Activated CD4-positive, alpha-beta memory T cell treated with anti-CD3 and anti-CD28 coated beads for 36 hours (primary cell): ENCODE measurements at regions of chr17 and their contacts with region 1.

Region 1: DNA sequence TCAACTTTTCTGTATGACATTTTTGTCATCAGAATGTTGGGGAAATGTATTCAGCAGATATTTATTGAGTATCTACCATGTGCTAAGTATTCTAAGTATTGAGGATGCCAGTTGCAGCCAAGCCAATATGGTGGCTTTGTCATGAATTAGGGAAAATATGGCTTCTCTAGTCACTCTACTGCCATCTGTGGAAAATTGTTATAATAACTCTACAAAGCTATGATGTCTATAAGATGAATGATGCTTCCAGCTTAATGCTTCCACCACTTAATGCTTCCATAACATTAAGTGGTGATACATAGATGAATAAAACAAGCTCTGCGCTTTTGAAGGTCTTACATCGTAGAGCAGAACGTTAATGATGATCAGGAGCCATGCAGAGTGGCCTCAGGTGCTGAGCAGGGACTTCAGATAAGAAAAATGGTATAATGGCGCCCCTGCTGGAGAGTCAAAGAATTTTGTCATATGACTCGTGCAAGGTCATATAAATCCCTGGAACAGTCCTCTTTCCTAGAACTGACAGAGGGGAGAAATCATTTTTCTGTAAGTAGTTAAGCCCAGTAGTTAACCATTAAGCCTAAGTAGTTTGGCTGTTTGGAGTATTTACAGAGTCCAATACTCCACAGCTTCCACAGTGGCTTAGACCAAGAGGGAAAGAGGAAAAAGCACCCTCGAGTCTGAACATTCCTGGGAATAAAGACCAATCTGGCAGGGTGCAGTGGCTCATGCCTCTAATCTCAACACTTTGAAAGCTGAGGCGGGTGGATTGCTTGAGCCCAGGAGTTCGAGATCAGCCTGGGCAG is 2.7 kb upstream of the TMIGD1 start:
- DNase-seq: peak; percentile 68
- H3K4me3 Mint-ChIP-seq: peak overlapping the region; percentile 13
- H3K27ac Mint-ChIP-seq: no peak overlapping the region
- H3K4me1 Mint-ChIP-seq: peaks cover 37% of the 10 kb centered on the region
- H3K27me3 Mint-ChIP-seq: no peaks in the 10 kb centered on the region

Region 2: GRCh38 chr17:30124273-30124796 is 212.2 kb before region 1 on chr17:
- CTCF ChIA-PET with region 1: interaction called, 137 read pairs
- POLR2A ChIA-PET with region 1: no interaction called
- intact Hi-C with region 1: loop called (anchors 1 kb)
- DNase-seq: no peak
- H3K4me3 Mint-ChIP-seq: no peak overlapping the region
- H3K27ac Mint-ChIP-seq: no peak overlapping the region
- H3K4me1 Mint-ChIP-seq: peaks cover 34% of the 10 kb centered on the region
- H3K27me3 Mint-ChIP-seq: no peaks in the 10 kb centered on the region

Region 3: GRCh38 chr17:30278032-30278431 is 58.5 kb before region 1 on chr17:
- CTCF ChIA-PET with region 1: interaction called, 17 read pairs
- POLR2A ChIA-PET with region 1: no interaction called
- intact Hi-C with region 1: no loop called
- DNase-seq: no peak
- H3K4me3 Mint-ChIP-seq: no peak overlapping the region
- H3K27ac Mint-ChIP-seq: no peak overlapping the region
- H3K4me1 Mint-ChIP-seq: no peaks in the 10 kb centered on the region
- H3K27me3 Mint-ChIP-seq: no peaks in the 10 kb centered on the region

Region 4: GRCh38 chr17:30299000-30299399 is 37.6 kb before region 1 on chr17:
- CTCF ChIA-PET with region 1: interaction called, 40 read pairs
- POLR2A ChIA-PET with region 1: no interaction called
- intact Hi-C with region 1: loop called (anchors 1 kb)
- DNase-seq: no peak
- H3K4me3 Mint-ChIP-seq: no peak overlapping the region
- H3K27ac Mint-ChIP-seq: no peak overlapping the region
- H3K4me1 Mint-ChIP-seq: peaks cover 6% of the 10 kb centered on the region
- H3K27me3 Mint-ChIP-seq: no peaks in the 10 kb centered on the region

Region 5: GRCh38 chr17:30363715-30364202 is 27.2 kb after region 1 on chr17:
- CTCF ChIA-PET with region 1: interaction called, 17 read pairs
- POLR2A ChIA-PET with region 1: interaction called, 12 read pairs
- intact Hi-C with region 1: loop called (anchors 1 kb)
- DNase-seq: peak; percentile 94
- H3K4me3 Mint-ChIP-seq: peak overlapping the region; percentile 13
- H3K27ac Mint-ChIP-seq: peak overlapping the region; percentile 78
- H3K4me1 Mint-ChIP-seq: peaks cover 28% of the 10 kb centered on the region
- H3K27me3 Mint-ChIP-seq: no peaks in the 10 kb centered on the region

Region 6: GRCh38 chr17:30378824-30379302 is 42.3 kb after region 1 on chr17 and contains the start of gene CPD:
- CTCF ChIA-PET with region 1: interaction called, 15 read pairs
- POLR2A ChIA-PET with region 1: interaction called, 3 read pairs
- intact Hi-C with region 1: loop called (anchors 1 kb)
- DNase-seq: peak; percentile 98
- H3K4me3 Mint-ChIP-seq: peak within 1 kb of the TSS; percentile 82
- H3K27ac Mint-ChIP-seq: peak within 1 kb of the TSS; percentile 75
- H3K4me1 Mint-ChIP-seq: peaks cover 65% of the 10 kb centered on the region
- H3K27me3 Mint-ChIP-seq: no peaks in the 10 kb centered on the region
- total RNA-seq, gene CPD: 34.1 to 34.3 TPM